GM12878 (cell line): ENCODE measurements at regions of chr4 and their contacts with region 1.

Region 1: GRCh38 chr4:154626793-154627484 is 14.5 kb upstream of the FGG start:
- DNase-seq: no peak
- ATAC-seq: peak; percentile 98
- H3K4me3 ChIP-seq: no peak overlapping the region
- H3K27ac ChIP-seq: no peak overlapping the region
- H3K4me1 ChIP-seq: no peaks in the 10 kb centered on the region
- H3K27me3 ChIP-seq: peaks cover 3% of the 10 kb centered on the region in 2 experiments
- CTCF ChIP-seq: peak; percentile 52 to 75 (median 64)
- EP300 ChIP-seq: no peak
- POLR2A ChIP-seq: no peak
- RAD21 ChIP-seq: peak; percentile 13; the same call in 1 of the 2 replicates

Region 2: GRCh38 chr4:153773236-153773690 is 853.7 kb before region 1 on chr4:
- CTCF ChIA-PET with region 1: no interaction called
- POLR2A ChIA-PET with region 1: no interaction called
- RAD21 ChIA-PET with region 1: no interaction called
- SMC1A ChIA-PET with region 1: no interaction called
- in situ Hi-C with region 1: no loop called
- intact Hi-C with region 1: loop called (anchors 10 kb)
- DNase-seq: no peak
- ATAC-seq: no peak
- H3K4me3 ChIP-seq: no peak overlapping the region
- H3K27ac ChIP-seq: no peak overlapping the region
- H3K4me1 ChIP-seq: no peaks in the 10 kb centered on the region
- H3K27me3 ChIP-seq: no peaks in the 10 kb centered on the region; a peak in 1 of 4 replicates
- CTCF ChIP-seq: no peak; a peak in 1 of 6 replicates
- EP300 ChIP-seq: no peak
- POLR2A ChIP-seq: no peak
- RAD21 ChIP-seq: peak; percentile 16; the same call in 1 of the 2 replicates

Region 3: DNA sequence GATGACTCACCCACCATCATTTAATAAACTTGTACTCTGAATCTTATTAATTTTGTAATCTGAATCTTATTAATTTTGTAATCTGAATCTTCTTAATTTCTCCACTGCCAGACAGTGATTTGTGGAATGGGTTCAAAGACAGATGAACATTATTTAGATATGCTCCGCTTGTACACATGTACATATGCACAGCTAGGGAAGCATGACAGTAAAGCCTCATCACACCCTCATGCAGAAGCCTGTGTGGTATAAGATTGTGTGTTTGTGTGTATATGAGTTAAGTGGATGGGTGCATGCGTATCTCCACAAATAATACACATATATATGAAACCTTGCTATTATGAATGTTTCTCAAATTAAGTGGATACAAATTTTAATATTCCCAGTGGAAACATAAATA is 519.6 kb before region 1 on chr4:
- CTCF ChIA-PET with region 1: no interaction called
- POLR2A ChIA-PET with region 1: no interaction called
- RAD21 ChIA-PET with region 1: no interaction called
- SMC1A ChIA-PET with region 1: no interaction called
- in situ Hi-C with region 1: no loop called
- intact Hi-C with region 1: no loop called
- DNase-seq: no peak
- ATAC-seq: no peak
- H3K4me3 ChIP-seq: no peak overlapping the region
- H3K27ac ChIP-seq: no peak overlapping the region
- H3K4me1 ChIP-seq: no peaks in the 10 kb centered on the region
- H3K27me3 ChIP-seq: no peaks in the 10 kb centered on the region
- CTCF ChIP-seq: no peak
- EP300 ChIP-seq: no peak
- POLR2A ChIP-seq: no peak
- RAD21 ChIP-seq: no peak

Region 4: GRCh38 chr4:154416190-154416547 is 210.8 kb before region 1 on chr4:
- CTCF ChIA-PET with region 1: no interaction called
- POLR2A ChIA-PET with region 1: no interaction called
- RAD21 ChIA-PET with region 1: no interaction called
- SMC1A ChIA-PET with region 1: no interaction called
- in situ Hi-C with region 1: no loop called
- intact Hi-C with region 1: no loop called
- DNase-seq: no peak
- ATAC-seq: peak; percentile 63
- H3K4me3 ChIP-seq: peak overlapping the region; percentile 78
- H3K27ac ChIP-seq: no peak overlapping the region; the same call in 1 of the 2 replicates
- H3K4me1 ChIP-seq: peaks cover 17% of the 10 kb centered on the region
- H3K27me3 ChIP-seq: 0 out of 4 replicates have a peak, but pooled peaks cover 0 to 2% of the 10 kb centered on the region in 2 experiments
- CTCF ChIP-seq: peak in 1 of 3 experiments; percentile 13; a peak in 2 of 6 replicates
- EP300 ChIP-seq: no peak
- POLR2A ChIP-seq: no peak
- RAD21 ChIP-seq: no peak

Region 5: DNA sequence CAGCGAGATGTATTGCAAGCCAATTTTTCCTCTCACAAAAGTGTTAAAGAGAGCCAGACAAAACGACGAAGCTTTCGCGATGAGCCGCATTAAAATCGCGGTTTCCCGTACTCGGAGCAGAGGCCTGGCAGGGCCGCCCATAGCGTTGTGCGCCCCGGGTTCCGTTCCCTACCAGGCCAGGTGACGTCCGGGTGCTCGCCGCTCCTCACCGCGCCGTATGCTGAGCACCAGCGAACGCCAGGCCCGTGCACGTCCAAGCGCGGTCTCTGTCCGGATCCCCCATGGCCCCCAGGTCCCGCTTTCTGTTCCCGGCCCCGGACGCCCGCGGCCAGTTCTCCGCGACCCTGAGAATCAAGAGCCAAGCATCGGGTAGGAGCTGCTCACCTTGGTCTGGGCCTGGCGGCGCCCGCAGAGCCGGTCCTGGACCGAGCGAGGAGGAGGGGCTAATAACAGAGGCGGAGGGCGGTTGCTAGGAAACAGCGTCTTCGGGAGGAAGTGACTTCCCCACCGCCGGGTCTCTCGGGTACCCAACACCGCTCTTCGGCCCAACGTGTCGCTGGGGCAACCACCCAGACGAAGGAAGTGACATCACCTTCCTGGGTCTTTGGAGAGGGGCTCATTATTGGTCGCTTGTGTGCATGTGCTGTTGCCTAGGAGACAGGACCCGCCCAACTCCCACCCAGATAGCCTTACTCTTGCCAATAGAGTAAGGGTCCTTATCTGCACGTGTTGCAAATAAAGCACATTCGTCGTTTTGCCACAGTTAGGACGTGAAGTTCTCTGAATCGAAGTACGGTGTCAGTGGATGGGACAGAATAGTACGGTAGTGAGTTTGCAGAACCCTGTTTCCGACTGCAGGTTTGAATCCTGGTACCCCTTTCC is 749.7 kb after region 1 on chr4 and contains the start of gene MAP9:
- CTCF ChIA-PET with region 1: no interaction called
- POLR2A ChIA-PET with region 1: no interaction called
- RAD21 ChIA-PET with region 1: no interaction called
- SMC1A ChIA-PET with region 1: no interaction called
- in situ Hi-C with region 1: no loop called
- intact Hi-C with region 1: loop called (anchors 10 kb)
- DNase-seq: peak; percentile 78
- ATAC-seq: peak; percentile 97
- H3K4me3 ChIP-seq: peak within 1 kb of the TSS; percentile 55
- H3K27ac ChIP-seq: peak within 1 kb of the TSS; percentile 46
- H3K4me1 ChIP-seq: peaks cover 3% of the 10 kb centered on the region; the same call in 1 of the 2 replicates
- H3K27me3 ChIP-seq: no peaks in the 10 kb centered on the region
- CTCF ChIP-seq: no peak
- EP300 ChIP-seq: no peak
- POLR2A ChIP-seq: peak; percentile 28; the same call in 1 of the 2 replicates
- RAD21 ChIP-seq: no peak
- polyA plus RNA-seq, gene MAP9: 3.2 to 6.1 TPM